Sigmoid colon (tissue), 7 donors: ENCODE measurements at regions of chr15 and their contacts with region 1.

Region 1: GRCh38 chr15:75625542-75626347 is at the start of gene SNUPN:
- DNase-seq: peak; percentile 96
- H3K4me3 ChIP-seq: peak within 1 kb of the TSS; percentile 73 to 97 (median 94)
- H3K27ac ChIP-seq: peak within 1 kb of the TSS; percentile 90 to 98 (median 94)
- H3K4me1 ChIP-seq: peaks cover 0 to 21% (median 14%) of the 10 kb centered on the region in 4 donors
- H3K27me3 ChIP-seq: no peaks in the 10 kb centered on the region
- CTCF ChIP-seq: no peak
- EP300 ChIP-seq: no peak
- POLR2A ChIP-seq: peak; percentile 36 to 53
- total RNA-seq, gene SNUPN: 15.3 to 28.6 (median 21.9) TPM

Region 2: GRCh38 chr15:74857082-74857655 is 768.6 kb before region 1 on chr15:
- intact Hi-C with region 1: no loop called
- DNase-seq: no peak
- H3K4me3 ChIP-seq: no peak overlapping the region
- H3K27ac ChIP-seq: no peak overlapping the region
- H3K4me1 ChIP-seq: peaks cover 0 to 26% (median 12%) of the 10 kb centered on the region in 4 donors
- H3K27me3 ChIP-seq: no peaks in the 10 kb centered on the region
- CTCF ChIP-seq: no peak
- EP300 ChIP-seq: no peak
- POLR2A ChIP-seq: no peak

Region 3: GRCh38 chr15:75367913-75368688 is 257.6 kb before region 1 on chr15 and contains the start of gene MAN2C1:
- intact Hi-C with region 1: loop called (anchors 5 kb)
- DNase-seq: peak; percentile 98
- H3K4me3 ChIP-seq: peak within 1 kb of the TSS; percentile 73 to 99 (median 82)
- H3K27ac ChIP-seq: peak within 1 kb of the TSS; percentile 95 to 99 (median 97)
- H3K4me1 ChIP-seq: peaks cover 0 to 22% (median 18%) of the 10 kb centered on the region in 4 donors
- H3K27me3 ChIP-seq: no peaks in the 10 kb centered on the region
- CTCF ChIP-seq: peak in 2 of 4 experiments; percentile 65 to 80
- EP300 ChIP-seq: peak in 1 of 4 donors; percentile 20
- POLR2A ChIP-seq: peak; percentile 70 to 71
- total RNA-seq, gene MAN2C1: 94.2 to 221 (median 132) TPM

Region 4: DNA sequence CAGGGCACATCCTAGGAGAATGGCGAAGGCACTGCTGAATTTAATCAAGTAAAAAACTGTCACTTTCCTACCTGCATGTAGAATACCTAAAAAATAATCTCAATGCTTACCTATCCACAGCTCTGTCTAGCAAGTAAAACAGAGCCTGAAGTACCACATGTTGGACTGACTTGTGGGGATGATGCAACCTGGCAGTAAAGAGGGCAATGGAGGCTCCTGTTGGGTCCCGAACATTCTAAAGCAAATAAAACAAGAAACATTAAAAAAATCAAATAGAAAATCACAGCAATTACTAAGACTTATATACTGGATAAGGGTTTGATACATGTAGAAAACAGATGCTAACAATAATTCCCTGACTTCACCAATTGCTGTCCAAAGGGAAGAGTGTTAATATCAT is 102.7 kb before region 1 on chr15:
- intact Hi-C with region 1: loop called (anchors 5 kb)
- DNase-seq: no peak
- H3K4me3 ChIP-seq: no peak overlapping the region
- H3K27ac ChIP-seq: no peak overlapping the region
- H3K4me1 ChIP-seq: peaks cover 0 to 2% (median under 1%) of the 10 kb centered on the region in 4 donors
- H3K27me3 ChIP-seq: no peaks in the 10 kb centered on the region
- CTCF ChIP-seq: no peak
- EP300 ChIP-seq: no peak
- POLR2A ChIP-seq: no peak

Region 5: DNA sequence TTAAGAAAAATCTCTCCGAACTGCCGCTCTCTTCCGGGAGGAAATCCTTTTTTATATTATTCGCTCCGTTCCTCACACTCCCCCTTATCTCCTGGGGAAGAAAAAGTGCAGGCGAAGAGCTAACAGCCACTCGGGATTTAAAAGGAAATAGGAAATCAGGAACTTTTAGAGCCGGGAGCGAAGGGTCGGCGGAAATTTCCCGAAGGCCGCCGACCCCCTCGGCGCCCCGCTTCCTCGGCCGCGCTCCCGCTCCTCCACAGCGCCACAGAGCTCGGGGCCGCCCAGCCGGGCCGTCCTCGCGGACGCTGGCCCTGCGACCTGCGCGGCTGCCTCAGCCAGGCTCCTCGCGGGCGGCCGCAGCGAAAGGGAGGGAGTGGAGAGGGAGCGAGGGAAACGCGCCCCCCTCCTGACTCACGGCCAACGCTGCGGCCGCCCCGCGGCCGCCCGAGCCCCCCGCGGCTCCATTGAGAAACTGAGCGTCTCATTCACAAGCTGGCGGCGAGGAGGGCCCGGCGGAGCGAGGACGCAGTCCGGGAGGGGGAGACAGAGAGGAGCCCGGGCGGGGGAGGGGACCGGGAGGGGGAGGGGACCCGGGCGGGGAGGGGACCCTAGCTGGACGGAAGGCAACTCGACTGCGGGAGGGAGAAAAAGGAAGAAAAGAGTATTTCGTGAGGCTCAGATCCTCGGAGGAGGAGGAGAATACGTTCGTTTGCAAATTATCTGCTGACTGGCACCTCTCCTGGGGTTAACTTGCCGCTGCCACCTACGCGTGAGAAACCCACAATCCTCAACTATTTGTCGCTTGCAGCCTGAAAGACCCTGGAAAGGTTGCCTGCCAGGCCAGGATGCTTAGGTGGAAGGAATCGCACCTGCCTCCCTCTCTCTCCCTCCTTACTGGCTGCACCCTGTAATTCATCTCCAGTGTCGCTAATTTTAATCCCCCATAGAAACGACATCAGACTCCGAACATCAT is 46.5 kb before region 1 on chr15 and contains the start of gene PTPN9:
- intact Hi-C with region 1: loop called (anchors 2 kb)
- DNase-seq: peak; percentile 88
- H3K4me3 ChIP-seq: peak within 1 kb of the TSS; percentile 59 to 99 (median 94)
- H3K27ac ChIP-seq: peak within 1 kb of the TSS; percentile 89 to 92 (median 92)
- H3K4me1 ChIP-seq: peaks cover 0 to 29% (median 23%) of the 10 kb centered on the region in 4 donors
- H3K27me3 ChIP-seq: no peaks in the 10 kb centered on the region
- CTCF ChIP-seq: peak in 2 of 4 experiments; percentile 16 to 64
- EP300 ChIP-seq: no peak
- POLR2A ChIP-seq: peak in 1 of 2 donors; percentile 13
- total RNA-seq, gene PTPN9: 12.2 to 21.0 (median 17.2) TPM